ENCODE measurements at regions of chr14 and their contacts with region 1.

Region 1: GRCh38 chr14:35416108-35416750 is 11.7 kb upstream of the NFKBIA start:
- DNase-seq: no peak
- H3K4me3 ChIP-seq: no peak overlapping the region
- H3K27ac ChIP-seq: no peak overlapping the region
- H3K4me1 ChIP-seq: no peaks in the 10 kb centered on the region
- H3K27me3 ChIP-seq: no peaks in the 10 kb centered on the region
- CTCF ChIP-seq: no peak
- POLR2A ChIP-seq: no peak

Region 2: DNA sequence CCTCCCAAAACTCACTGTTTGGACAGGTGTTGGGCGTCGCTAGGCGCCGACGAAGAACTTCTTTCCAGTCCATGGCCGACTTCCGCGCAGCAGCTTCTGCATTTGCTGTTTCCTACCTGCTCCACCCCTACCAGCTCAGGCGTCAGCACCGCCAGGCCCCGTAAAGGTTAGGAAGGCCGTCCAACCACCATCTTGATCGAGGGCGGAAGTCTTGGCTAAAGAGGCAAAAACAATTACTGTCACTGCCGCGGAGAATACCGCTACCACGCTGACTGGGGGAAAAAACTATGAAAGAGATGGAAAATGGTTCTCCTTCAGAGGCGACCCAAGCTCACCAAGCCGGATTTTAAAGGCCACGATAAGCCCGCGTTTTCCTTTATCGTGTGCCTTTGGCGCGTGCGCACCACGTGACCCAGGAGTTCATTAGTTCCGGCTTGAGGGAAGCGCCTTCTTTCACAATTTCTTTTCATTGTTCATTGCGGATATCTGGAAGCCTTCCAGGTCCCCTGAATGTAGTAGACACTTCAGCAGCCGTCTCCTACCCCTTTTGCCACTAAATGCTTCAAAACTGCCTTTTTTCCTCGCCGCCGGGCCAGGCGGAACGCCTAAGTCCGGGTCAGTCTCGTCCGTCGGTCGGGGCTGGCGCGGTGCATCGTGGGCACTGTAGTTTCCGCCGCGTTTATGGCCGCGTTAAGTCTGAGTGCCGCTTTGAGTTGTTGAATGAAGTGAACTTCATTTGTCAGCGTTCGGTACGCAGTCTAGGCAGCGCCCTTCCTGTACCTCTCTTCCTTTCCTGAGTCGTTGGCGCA is 294.1 kb before region 1 on chr14 and contains the starts of genes PPP2R3C and PRORP:
- intact Hi-C with region 1: loop called (anchors 10 kb)
- DNase-seq: peak; percentile 96
- H3K4me3 ChIP-seq: peak within 1 kb of the TSS; percentile 79 to 90
- H3K27ac ChIP-seq: peak within 1 kb of the TSS; percentile 96 to 97
- H3K4me1 ChIP-seq: peaks cover 11% of the 10 kb centered on the region
- H3K27me3 ChIP-seq: no peaks in the 10 kb centered on the region
- CTCF ChIP-seq: no peak
- POLR2A ChIP-seq: no peak
- total RNA-seq, gene PPP2R3C: 30.6 to 37.5 TPM
- total RNA-seq, gene PRORP: 24.3 to 34.4 TPM

Region 3: DNA sequence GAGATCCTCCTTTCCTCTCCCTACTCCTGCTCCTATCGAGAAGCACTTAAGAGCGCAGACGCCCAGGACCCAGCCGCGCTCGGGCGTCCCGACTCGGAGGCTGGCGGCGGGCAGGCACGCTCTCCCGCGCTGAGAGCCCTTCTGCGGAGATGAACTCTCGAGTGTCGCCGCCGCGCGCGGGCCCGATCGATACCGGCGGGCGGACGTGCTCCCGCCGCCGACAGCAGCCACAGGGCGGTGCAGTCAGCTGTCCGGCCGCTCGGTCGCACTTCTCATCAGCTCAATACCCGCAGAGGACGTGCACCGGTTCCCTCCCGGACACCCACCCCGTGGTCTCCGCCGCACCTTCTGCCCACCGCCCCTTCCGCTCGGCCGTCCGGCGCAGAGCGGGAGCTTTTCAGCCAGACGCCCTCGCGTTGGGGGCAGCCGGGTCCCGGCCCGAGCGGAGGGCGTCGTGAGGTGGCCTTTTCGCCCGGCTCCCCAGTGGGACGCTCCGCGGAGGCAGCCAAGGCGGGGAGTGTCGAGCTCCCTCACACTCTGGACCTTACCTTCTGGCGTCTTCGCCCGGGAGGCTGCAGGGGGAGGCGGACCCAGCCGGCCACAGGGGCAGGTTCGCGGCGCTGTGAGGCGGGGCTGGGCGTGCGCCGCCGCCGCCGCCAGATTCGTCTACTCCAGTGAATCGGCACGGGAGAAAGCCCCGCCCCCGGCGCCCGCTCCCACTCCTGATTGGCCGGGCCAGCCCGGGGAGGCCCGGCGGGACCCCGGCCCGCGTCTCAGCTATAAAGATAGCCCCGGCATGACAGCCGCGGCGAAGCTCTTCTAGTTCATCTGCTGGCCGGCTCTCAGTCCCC is 117.4 kb after region 1 on chr14 and contains the start of gene INSM2:
- intact Hi-C with region 1: no loop called
- DNase-seq: peak; percentile 86
- H3K4me3 ChIP-seq: peak within 1 kb of the TSS; percentile 55 to 64
- H3K27ac ChIP-seq: peak within 1 kb of the TSS in 1 of 2 donors; percentile 35
- H3K4me1 ChIP-seq: peaks cover 17% of the 10 kb centered on the region
- H3K27me3 ChIP-seq: no peaks in the 10 kb centered on the region
- CTCF ChIP-seq: no peak
- POLR2A ChIP-seq: no peak
- total RNA-seq, gene INSM2: 2.3 to 2.4 TPM